Gastrocnemius medialis (tissue), 4 donors: ENCODE measurements at regions of chr2 and their contacts with region 1.

Region 1: DNA sequence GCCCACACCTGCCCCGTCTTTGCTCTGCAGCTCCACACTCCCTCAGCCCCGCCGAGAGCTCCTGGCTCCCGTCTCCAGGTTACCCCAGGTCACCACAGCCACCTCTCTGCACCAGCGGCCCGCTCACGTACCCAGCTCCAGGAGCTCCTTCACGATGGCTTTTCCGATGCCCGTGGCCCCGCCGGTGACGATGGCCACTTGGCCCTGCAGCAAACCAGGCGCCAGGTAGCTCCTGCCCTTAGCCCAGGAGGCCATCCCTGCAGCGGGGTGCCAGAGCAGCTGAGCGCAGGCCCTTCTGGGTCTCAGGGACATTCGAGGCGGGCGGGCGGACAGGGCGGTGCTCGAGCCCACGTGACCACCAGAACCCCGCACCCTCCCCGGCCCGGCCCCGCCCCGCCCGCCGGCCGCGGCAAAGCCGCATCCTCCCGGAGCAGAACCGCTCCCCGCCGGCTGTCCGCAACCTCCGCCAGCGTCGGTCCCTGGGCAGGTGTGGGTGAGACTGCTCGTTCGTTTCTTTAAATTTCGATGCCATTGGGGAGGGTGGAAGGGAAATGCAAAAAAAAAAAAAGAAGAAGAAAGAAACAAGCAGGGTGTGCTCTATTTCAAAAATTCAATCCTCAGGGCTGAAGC is at the starts of genes PECR and TMEM169:
- DNase-seq: peak; percentile 52 to 64
- ATAC-seq: peak; percentile 90
- H3K4me3 ChIP-seq: peak within 1 kb of the TSS; percentile 63 to 74 (median 66)
- H3K27ac ChIP-seq: peak within 1 kb of the TSS; percentile 16 to 44 (median 40)
- H3K4me1 ChIP-seq: peaks cover 9 to 17% of the 10 kb centered on the region in 2 donors
- H3K27me3 ChIP-seq: no peaks in the 10 kb centered on the region
- CTCF ChIP-seq: no peak
- POLR2A ChIP-seq: no peak
- total RNA-seq, gene PECR: 0.42 to 7.5 (median 1.5) TPM
- total RNA-seq, gene TMEM169: not detected

Region 2: GRCh38 chr2:215664847-215665525 is 416.6 kb before region 1 on chr2:
- in situ Hi-C with region 1: no loop called
- intact Hi-C with region 1: no loop called
- DNase-seq: peak in 1 of 2 donors; percentile 20
- ATAC-seq: peak in 1 of 2 donors; percentile 49
- H3K4me3 ChIP-seq: no peak overlapping the region
- H3K27ac ChIP-seq: no peak overlapping the region
- H3K4me1 ChIP-seq: no peaks in the 10 kb centered on the region
- H3K27me3 ChIP-seq: no peaks in the 10 kb centered on the region
- CTCF ChIP-seq: no peak
- POLR2A ChIP-seq: no peak

Region 3: DNA sequence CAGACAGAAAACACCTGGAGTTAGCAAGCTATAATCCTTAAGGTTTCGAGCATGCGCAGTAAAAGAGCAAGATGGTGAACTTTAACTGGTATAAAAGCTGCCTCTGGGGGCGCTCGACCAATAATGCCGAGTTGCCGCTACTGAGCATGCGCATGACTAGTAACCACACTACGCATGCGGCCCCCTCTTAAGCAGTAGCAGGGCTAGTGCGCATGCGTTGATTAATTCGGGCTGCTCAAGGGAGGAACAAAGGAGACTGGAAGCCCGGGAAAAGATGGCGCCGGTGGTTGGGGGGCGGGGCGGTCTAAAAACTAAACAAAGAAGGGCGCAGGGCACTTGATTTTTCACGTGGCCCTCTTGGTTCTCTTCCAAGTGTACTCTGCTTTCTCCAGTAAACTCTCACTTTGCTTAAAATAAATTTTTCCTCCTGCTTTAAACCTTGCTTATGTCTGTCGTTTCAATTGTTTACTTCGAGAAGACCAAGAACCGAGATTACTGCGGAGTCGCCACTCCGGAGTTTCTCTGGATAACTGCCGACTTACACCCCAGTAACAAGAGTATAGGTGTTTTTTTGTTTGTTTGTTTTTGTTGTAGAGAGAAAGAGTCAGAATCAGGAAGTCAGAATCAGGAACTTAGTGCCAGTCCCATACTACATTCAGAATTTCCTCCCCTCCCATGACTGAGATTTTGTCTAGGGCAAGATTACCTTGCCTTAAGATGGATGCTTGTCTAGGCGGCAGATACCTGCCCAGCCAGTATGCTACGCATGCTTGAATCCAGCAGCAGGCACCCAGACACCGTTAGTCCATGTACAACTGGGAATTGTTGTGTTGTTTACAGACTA is 33.3 kb after region 1 on chr2:
- in situ Hi-C with region 1: no loop called
- intact Hi-C with region 1: loop called (anchors 2 kb)
- DNase-seq: peak; percentile 96 to 98
- ATAC-seq: peak; percentile 100
- H3K4me3 ChIP-seq: peak overlapping the region; percentile 56 to 71 (median 64)
- H3K27ac ChIP-seq: peak overlapping the region; percentile 78 to 87 (median 84)
- H3K4me1 ChIP-seq: peaks cover 22 to 34% of the 10 kb centered on the region in 2 donors
- H3K27me3 ChIP-seq: no peaks in the 10 kb centered on the region
- CTCF ChIP-seq: peak; percentile 85 to 87 (median 86)
- POLR2A ChIP-seq: peak in 1 of 2 donors; percentile 37

Region 4: GRCh38 chr2:216139884-216140283 is 58.3 kb after region 1 on chr2:
- in situ Hi-C with region 1: no loop called
- intact Hi-C with region 1: no loop called
- DNase-seq: no peak
- ATAC-seq: no peak
- H3K4me3 ChIP-seq: no peak overlapping the region
- H3K27ac ChIP-seq: no peak overlapping the region
- H3K4me1 ChIP-seq: no peaks in the 10 kb centered on the region
- H3K27me3 ChIP-seq: no peaks in the 10 kb centered on the region
- CTCF ChIP-seq: peak in 1 of 5 experiments; percentile 28
- POLR2A ChIP-seq: no peak